ENCODE measurements at regions of chr18 and their contacts with region 1.

Region 1: GRCh38 chr18:75478996-75479880 is 51.7 kb upstream of the SMIM21 start:
- DNase-seq: no peak
- ATAC-seq: peak; percentile 56 to 87 (median 65)
- H3K4me3 ChIP-seq: no peak overlapping the region
- H3K27ac ChIP-seq: no peak overlapping the region
- H3K4me1 ChIP-seq: no peaks in the 10 kb centered on the region
- H3K27me3 ChIP-seq: peaks cover 0 to 4% (median 0%) of the 10 kb centered on the region in 3 donors
- CTCF ChIP-seq: peak; percentile 63

Region 2: DNA sequence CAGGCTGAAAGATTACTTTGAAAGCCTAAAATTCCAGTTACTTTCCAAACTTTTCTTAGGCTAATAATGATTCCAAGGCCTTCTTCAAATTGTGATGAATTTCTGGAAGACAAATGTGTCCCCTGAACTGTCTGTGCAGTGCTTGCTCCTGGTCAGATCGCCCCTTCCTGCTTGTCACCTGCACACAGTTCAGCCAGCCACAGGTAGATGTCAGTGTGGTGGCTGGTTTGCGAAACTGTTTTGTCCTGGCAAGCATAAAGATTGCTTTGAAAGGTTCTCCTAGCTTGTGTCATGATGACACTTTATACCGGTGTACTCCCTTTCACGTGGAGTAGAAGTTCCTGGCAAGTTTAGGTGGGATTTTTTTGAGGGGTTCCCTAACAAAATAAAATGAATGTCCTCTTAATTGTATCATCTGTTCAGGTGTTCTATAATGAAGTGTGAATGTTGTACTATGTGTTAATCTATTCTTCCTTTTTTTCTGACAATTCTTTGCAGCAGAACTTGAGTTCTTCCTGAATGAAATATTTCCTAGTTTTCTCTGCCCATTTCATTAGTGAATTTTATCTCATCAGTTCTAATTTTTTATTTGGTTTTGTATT is 582.7 kb before region 1 on chr18:
- intact Hi-C with region 1: loop called in 1 of 2 experiments (anchors 2 kb)
- DNase-seq: no peak
- ATAC-seq: peak; percentile 92 to 96 (median 94)
- H3K4me3 ChIP-seq: no peak overlapping the region
- H3K27ac ChIP-seq: no peak overlapping the region
- H3K4me1 ChIP-seq: no peaks in the 10 kb centered on the region
- H3K27me3 ChIP-seq: no peaks in the 10 kb centered on the region
- CTCF ChIP-seq: peak; percentile 70

Region 3: DNA sequence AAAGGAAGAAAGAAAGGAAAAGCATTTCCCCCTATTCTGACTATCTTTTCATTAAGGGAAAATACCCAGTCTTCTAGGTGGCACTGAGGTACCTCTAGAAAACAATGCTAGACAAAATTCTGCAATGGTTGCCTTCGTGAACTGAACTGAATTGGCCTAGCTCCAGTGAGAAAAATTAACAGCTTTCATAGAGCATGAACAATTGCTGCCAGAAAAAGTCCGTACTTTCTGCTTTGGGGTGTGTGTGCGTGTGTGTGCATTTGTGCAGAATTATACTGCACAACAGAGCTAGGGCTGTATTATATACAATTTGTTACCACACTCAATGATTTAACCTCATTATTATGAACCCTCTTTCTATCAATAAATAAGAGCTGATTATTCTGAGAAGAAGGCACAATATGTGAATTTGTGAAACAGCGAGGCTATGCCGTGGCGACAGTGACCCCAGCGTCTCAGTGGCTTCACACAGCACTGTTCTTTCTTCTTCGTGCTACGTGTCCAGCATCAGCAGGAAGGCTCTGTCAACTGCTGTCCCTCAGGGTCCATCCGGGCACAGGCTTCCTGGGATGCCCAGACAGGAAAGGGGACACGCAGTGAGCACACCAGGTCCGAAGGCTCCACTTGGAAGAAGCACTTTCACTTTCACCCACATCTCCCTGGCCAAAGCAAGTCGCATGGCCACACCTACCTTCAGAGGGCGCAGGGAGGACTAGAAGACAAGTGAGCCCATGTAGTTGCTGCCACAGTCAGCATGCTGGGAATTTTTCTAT is 317.8 kb before region 1 on chr18:
- intact Hi-C with region 1: loop called in 1 of 2 experiments (anchors 10 kb)
- DNase-seq: peak; percentile 35 to 63
- ATAC-seq: peak; percentile 76 to 84 (median 80)
- H3K4me3 ChIP-seq: peak overlapping the region; percentile 61
- H3K27ac ChIP-seq: peak overlapping the region; percentile 28
- H3K4me1 ChIP-seq: peaks cover 13% of the 10 kb centered on the region
- H3K27me3 ChIP-seq: peaks cover 0 to 1% (median 0%) of the 10 kb centered on the region in 3 donors
- CTCF ChIP-seq: peak; percentile 19

Region 4: GRCh38 chr18:75247611-75248421 is 231.4 kb before region 1 on chr18:
- intact Hi-C with region 1: loop called in 1 of 2 experiments (anchors 10 kb)
- DNase-seq: no peak
- ATAC-seq: peak in 3 of 4 donors; percentile 49 to 66 (median 56)
- H3K4me3 ChIP-seq: peak overlapping the region; percentile 63
- H3K27ac ChIP-seq: peak overlapping the region; percentile 74
- H3K4me1 ChIP-seq: peaks cover 38% of the 10 kb centered on the region
- H3K27me3 ChIP-seq: no peaks in the 10 kb centered on the region
- CTCF ChIP-seq: no peak